ENCODE measurements at regions of chr11 and their contacts with region 1.

Region 1: GRCh38 chr11:76380967-76381719 is at the starts of genes GVQW3 and THAP12:
- DNase-seq: peak; percentile 97 to 99
- ATAC-seq: peak; percentile 86 to 96 (median 87)
- H3K4me3 ChIP-seq: peak within 1 kb of the TSS; percentile 58
- H3K4me3 Mint-ChIP-seq: peak within 1 kb of the TSS; percentile 93
- H3K27ac ChIP-seq: peak within 1 kb of the TSS; percentile 68
- H3K27ac Mint-ChIP-seq: peak within 1 kb of the TSS; percentile 91 to 93
- H3K4me1 ChIP-seq: peaks cover 24% of the 10 kb centered on the region
- H3K4me1 Mint-ChIP-seq: peaks cover 34 to 64% of the 10 kb centered on the region in 2 donors
- H3K27me3 ChIP-seq: no peaks in the 10 kb centered on the region
- H3K27me3 Mint-ChIP-seq: no peaks in the 10 kb centered on the region
- CTCF ChIP-seq: no peak
- total RNA-seq, gene GVQW3: 3.2 to 5.6 (median 4.0) TPM
- total RNA-seq, gene THAP12: 56.0 to 66.1 (median 64.3) TPM

Region 2: GRCh38 chr11:76235233-76236091 is 145.7 kb before region 1 on chr11:
- intact Hi-C with region 1: loop called (anchors 1 kb)
- DNase-seq: peak; percentile 90 to 96
- ATAC-seq: peak; percentile 86 to 94 (median 90)
- H3K4me3 ChIP-seq: peak overlapping the region; percentile 96
- H3K4me3 Mint-ChIP-seq: peak overlapping the region; percentile 93
- H3K27ac ChIP-seq: peak overlapping the region; percentile 62
- H3K27ac Mint-ChIP-seq: peak overlapping the region; percentile 95 to 97
- H3K4me1 ChIP-seq: peaks cover 55% of the 10 kb centered on the region
- H3K4me1 Mint-ChIP-seq: peaks cover 28 to 46% of the 10 kb centered on the region in 2 donors
- H3K27me3 ChIP-seq: no peaks in the 10 kb centered on the region
- H3K27me3 Mint-ChIP-seq: peaks cover 0 to 10% of the 10 kb centered on the region in 2 donors
- CTCF ChIP-seq: no peak

Region 3: DNA sequence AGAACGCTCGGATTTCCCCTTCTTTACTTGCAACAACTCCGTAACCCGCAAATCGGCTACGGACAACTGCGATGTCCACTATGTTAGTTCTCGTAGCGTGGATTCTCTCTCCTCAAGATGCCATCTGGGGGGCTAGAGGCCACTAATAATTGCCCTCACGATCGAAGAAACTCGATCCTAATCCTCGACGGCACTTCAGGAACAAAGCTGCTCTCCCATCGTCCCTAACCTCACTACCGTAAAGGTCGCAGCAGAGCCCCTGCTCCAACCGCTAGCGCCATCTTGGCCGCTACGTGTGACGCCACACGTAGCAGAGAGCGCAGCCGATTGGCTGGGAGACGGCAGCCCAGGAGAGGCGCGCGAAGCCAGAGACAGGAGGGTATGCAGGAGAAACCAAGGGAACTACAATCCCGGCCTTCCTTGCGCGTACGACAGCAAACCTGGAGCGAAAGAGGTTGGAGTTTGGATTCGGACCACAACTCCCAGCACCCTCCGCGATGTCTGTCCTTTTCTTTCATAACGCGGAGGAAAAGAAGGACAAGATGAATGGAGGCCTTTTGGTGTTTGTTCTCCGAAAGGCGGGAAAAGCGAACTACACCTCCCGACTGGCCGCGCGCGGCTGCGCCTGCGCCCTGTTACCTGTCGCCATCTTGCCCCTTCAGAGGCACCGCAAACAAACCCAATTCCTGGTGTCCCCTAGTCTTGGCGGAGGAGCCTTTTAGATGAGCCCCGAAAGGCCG is 63.4 kb after region 1 on chr11 and contains the start of gene EMSY:
- intact Hi-C with region 1: loop called (anchors 1 kb)
- DNase-seq: peak; percentile 82 to 96
- ATAC-seq: peak; percentile 91 to 97 (median 94)
- H3K4me3 ChIP-seq: peak within 1 kb of the TSS; percentile 84
- H3K4me3 Mint-ChIP-seq: peak within 1 kb of the TSS; percentile 98
- H3K27ac ChIP-seq: peak within 1 kb of the TSS; percentile 86
- H3K27ac Mint-ChIP-seq: peak within 1 kb of the TSS; percentile 98 to 99
- H3K4me1 ChIP-seq: peaks cover 12% of the 10 kb centered on the region
- H3K4me1 Mint-ChIP-seq: peaks cover 25 to 50% of the 10 kb centered on the region in 2 donors
- H3K27me3 ChIP-seq: no peaks in the 10 kb centered on the region
- H3K27me3 Mint-ChIP-seq: no peaks in the 10 kb centered on the region
- CTCF ChIP-seq: no peak
- total RNA-seq, gene EMSY: 36.0 to 43.8 (median 39.4) TPM

Region 4: DNA sequence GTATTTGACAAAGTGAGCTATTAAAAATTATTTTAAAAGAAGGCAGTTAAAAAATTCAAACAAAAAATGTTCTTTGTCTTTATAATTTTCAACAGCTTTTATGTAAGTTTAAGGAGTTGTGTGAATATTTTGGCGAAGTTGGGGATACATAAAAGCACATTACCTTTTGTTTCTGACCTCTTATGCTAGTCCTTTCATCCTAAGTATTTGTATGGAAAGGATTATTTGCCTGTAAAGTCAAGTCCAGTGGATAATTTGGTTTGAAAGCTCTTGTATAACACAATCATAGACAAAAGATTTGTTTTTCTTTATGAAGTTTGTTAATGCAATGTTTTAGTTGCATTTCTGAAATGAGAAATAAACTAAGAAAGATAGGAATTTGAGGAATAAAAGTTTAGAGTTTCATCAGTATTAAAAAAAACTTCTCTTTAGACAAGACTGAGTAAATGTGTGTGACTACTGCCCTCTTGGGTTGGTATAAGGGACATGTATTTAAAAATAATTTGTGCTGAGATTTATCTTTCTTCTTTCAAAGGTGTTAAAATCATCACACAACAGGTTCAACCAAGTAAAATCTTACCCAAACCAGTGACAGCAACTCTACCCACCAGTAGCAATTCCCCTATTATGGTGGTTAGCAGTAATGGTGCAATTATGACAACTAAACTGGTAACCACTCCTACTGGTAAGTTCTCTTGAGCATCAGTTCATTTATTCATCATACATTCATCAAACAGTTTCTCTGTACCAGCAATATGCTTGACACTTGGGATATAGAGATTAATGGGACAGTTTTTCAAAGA is 131.9 kb after region 1 on chr11:
- intact Hi-C with region 1: loop called (anchors 10 kb)
- DNase-seq: peak in 1 of 2 donors; percentile 38
- ATAC-seq: peak; percentile 39 to 71 (median 64)
- H3K4me3 ChIP-seq: no peak overlapping the region
- H3K4me3 Mint-ChIP-seq: no peak overlapping the region
- H3K27ac ChIP-seq: no peak overlapping the region
- H3K27ac Mint-ChIP-seq: peak overlapping the region in 1 of 2 donors; percentile 34
- H3K4me1 ChIP-seq: no peaks in the 10 kb centered on the region
- H3K4me1 Mint-ChIP-seq: peaks cover 0 to 5% of the 10 kb centered on the region in 2 donors
- H3K27me3 ChIP-seq: no peaks in the 10 kb centered on the region
- H3K27me3 Mint-ChIP-seq: no peaks in the 10 kb centered on the region
- CTCF ChIP-seq: peak; percentile 49